Panc1 (cell line): ENCODE measurements at regions of chr1 and their contacts with region 1.

Region 1: DNA sequence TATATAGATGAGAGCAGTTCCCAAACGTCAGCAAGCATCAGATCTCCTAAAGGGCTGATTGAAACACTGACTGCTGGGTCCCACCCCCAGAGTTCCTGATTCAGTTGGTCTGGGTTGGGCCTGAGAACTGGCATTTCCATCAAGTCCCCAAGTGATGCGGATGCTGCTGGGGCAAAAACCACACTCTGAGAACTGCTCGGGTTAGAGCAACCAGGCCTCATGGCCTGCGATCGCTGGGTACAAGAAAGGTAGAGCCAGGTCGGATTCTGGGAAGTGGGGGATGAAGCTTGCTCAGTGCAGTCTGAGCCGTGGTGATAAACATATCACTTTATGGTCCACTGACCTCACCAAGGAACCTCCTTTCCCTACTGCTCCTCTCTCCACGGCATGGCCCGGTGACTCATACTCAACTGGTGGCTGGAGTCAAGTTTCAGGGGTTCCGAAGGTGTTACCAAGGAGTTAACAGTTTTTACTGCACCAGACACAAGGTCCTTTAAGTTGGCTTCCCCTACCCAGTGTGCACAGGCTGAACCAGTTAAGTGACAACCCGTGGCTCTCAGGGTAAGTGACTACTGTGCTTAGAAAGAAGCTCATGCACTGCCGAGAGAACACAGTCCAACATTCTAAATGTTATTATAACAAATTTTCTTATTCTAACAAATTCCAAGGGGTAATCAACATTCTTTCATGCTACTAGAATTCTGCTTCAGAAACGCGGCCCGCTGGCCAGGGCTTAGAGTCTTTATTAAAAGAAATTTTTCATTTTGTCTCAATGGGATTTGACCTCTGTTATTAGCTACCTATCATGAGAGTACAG is 153.5 kb downstream of the TGFBR3 start:
- DNase-seq: no peak
- ATAC-seq: peak; percentile 69
- H3K4me3 ChIP-seq: no peak overlapping the region
- H3K27ac ChIP-seq: peak overlapping the region; percentile 82
- H3K4me1 ChIP-seq: peaks cover 62% of the 10 kb centered on the region
- H3K27me3 ChIP-seq: no peaks in the 10 kb centered on the region
- CTCF ChIP-seq: no peak

Region 2: GRCh38 chr1:91529856-91530255 is 202.6 kb before region 1 on chr1:
- CTCF ChIA-PET with region 1: no interaction called
- POLR2A ChIA-PET with region 1: no interaction called
- in situ Hi-C with region 1: no loop called
- intact Hi-C with region 1: loop called (anchors 10 kb)
- DNase-seq: peak; percentile 8
- ATAC-seq: peak; percentile 82
- H3K4me3 ChIP-seq: no peak overlapping the region
- H3K27ac ChIP-seq: peak overlapping the region; percentile 11; the same call in 1 of the 2 replicates
- H3K4me1 ChIP-seq: no peaks in the 10 kb centered on the region; the same call in 1 of the 2 replicates
- H3K27me3 ChIP-seq: no peaks in the 10 kb centered on the region
- CTCF ChIP-seq: peak; percentile 68; the same call in 1 of the 2 replicates

Region 3: GRCh38 chr1:91759076-91759475 is 26.6 kb after region 1 on chr1:
- CTCF ChIA-PET with region 1: no interaction called
- POLR2A ChIA-PET with region 1: interaction called, 12 read pairs
- in situ Hi-C with region 1: no loop called
- intact Hi-C with region 1: no loop called
- DNase-seq: no peak
- ATAC-seq: no peak
- H3K4me3 ChIP-seq: no peak overlapping the region
- H3K27ac ChIP-seq: 0 out of 2 replicates have a peak overlapping the region, but pooled peaks have one; percentile 6
- H3K4me1 ChIP-seq: 0 out of 2 replicates have a peak, but pooled peaks cover 3% of the 10 kb centered on the region
- H3K27me3 ChIP-seq: no peaks in the 10 kb centered on the region
- CTCF ChIP-seq: no peak

Region 4: GRCh38 chr1:91774520-91775203 is 42.2 kb after region 1 on chr1:
- CTCF ChIA-PET with region 1: no interaction called
- POLR2A ChIA-PET with region 1: no interaction called
- in situ Hi-C with region 1: no loop called
- intact Hi-C with region 1: no loop called
- DNase-seq: no peak
- ATAC-seq: no peak
- H3K4me3 ChIP-seq: no peak overlapping the region
- H3K27ac ChIP-seq: no peak overlapping the region
- H3K4me1 ChIP-seq: no peaks in the 10 kb centered on the region
- H3K27me3 ChIP-seq: no peaks in the 10 kb centered on the region
- CTCF ChIP-seq: no peak